Posterior vena cava (tissue), 2 donors: ENCODE measurements at regions of chr4 and their contacts with region 1.

Region 1: GRCh38 chr4:123396307-123397143 is at the start of gene SPRY1:
- DNase-seq: peak; percentile 93
- total RNA-seq, gene SPRY1: 109 to 111 TPM

Region 2: DNA sequence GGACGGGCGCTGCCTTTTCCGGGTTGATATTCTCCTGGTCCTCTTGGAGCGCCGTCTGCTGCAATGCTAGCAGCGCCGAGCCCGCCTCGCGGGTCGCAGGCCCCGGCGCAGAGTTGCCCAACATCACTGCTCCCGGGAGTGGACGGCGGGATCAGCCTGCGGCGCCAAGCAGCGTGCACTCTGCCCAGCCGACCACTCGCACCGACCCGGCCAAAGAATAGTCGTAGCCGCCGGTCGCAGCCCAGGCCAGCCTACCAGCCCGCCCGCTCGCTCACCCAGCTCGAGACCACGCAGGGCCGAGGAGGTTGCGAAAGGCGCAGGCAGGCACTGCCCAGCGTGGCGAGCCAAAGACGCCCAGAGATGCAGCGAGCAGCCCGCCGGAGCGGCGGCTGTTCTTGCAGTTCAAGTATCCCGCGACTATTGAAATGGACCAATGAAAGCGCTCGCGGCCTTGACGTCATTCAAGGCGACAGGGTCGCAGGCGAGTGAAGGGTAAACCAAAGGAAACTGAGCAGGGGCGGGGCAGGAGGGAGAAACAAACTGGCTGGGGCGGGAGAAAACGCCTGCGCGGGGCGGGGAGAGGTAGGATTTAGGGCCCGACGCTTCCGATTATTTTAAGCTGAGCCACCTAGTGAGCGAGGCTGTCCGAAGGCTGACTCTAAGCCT is 1572.9 kb before region 1 on chr4 and contains the start of gene CCNA2:
- intact Hi-C with region 1: no loop called
- DNase-seq: peak; percentile 99
- total RNA-seq, gene CCNA2: 0.52 to 1.2 TPM

Region 3: GRCh38 chr4:123661080-123661737 is 264.7 kb after region 1 on chr4:
- intact Hi-C with region 1: loop called in 1 of 2 experiments (anchors 5 kb)
- DNase-seq: no peak

Region 4: DNA sequence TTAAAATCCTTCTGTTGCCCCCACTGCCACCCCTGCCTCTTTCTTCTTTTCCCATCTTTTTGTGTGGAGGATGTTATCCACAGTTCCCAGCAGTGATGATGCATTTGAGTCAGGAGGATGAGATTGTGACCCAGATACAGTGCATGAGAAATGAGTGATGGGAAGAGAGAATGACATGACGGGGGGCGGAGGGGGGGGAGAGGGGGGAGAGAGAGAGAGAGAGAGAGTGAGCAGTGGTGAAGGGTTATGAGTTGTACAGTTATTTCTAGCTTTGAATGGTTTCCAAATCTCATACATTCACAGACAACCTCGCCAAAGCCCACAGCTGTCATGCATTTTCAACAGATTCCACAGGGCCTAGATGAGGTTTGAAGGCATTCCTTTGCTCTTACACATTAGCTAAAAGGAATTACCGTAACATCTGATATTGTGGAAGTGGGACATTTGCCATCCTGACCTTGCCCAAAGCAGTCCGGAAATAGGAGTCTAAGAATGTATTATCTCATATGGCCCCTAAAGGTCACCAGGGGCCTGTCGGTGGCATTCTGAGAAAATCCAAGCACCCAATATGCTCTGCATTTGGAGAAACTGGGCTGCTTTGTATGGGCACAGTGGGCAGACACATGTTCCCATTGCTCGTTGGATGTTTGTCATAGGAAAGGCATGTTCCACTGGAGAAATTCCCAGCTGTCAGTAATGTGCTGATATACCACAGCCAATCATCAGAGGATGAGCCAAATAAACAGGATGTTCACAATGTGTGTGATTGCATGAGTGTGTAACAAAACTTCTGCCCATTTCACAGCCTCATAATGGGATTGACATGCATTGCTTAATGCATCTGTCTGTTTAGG is 435.9 kb after region 1 on chr4:
- intact Hi-C with region 1: no loop called
- DNase-seq: peak; percentile 81

Region 5: GRCh38 chr4:124111922-124112321 is 715.4 kb after region 1 on chr4:
- intact Hi-C with region 1: loop called in 1 of 2 experiments (anchors 2 kb)
- DNase-seq: no peak

Region 6: GRCh38 chr4:124121461-124121934 is 725.0 kb after region 1 on chr4:
- intact Hi-C with region 1: loop called in 1 of 2 experiments (anchors 10 kb)
- DNase-seq: no peak

Region 7: GRCh38 chr4:124262211-124263179 is 866.0 kb after region 1 on chr4:
- intact Hi-C with region 1: loop called in 1 of 2 experiments (anchors 10 kb)
- DNase-seq: no peak